Right ventricle myocardium inferior (tissue), 1 donor: ENCODE measurements at regions of chr16 and their contacts with region 1.

Region 1: DNA sequence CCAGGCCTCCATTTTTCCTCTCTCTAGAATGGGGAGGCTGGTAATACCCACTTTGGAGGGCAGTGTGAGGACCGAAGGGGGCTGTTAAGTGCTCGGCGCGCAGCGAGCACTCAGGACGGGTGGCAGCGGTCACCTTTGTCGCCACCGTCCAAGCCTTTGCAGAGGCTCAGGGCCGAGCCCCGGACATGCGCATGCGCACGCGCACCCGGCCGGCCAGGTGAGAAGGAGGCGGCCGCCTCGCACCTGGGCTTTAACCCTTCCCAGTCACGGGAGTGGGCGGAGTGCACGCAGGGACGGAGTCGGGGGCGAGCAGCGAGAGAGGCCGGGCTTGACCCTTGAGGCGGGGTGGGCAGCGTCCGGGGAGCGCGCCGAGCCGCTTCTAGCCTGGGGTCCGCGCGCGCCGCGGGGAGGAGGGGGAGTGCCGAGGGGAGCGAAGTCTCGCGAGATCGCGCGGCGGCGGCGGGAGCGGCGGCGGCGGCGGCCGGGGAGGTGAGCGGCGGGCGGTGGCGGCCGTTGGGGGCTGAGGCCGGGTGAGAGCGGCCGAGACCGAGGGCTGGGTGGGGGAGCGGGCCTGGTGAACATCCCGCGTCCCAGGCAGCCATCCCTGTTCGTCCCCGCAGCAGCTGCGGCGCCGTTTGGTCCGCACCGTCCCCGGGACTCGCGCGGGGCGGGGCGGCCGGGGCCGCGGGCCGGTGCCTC is at the start of gene MRTFB:
- DNase-seq: peak; percentile 89
- ATAC-seq: peak; percentile 89
- total RNA-seq, gene MRTFB: 23.8 TPM

Region 2: DNA sequence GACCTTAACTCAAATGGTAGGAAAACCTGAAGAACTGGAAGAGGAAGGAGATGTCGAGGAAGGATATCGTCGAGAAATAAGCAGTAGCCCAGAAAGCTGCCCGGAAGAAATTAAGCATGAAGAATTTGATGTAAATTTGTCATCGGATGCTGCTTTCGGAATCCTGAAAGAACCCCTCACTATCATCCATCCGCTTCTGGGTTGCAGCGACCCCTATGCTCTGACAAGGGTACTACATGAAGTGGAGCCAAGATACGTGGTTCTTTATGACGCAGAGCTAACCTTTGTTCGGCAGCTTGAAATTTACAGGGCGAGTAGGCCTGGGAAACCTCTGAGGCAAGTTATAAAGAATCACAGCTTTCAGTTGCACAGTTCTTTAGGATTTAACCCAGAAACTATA is 135.6 kb before region 1 on chr16:
- intact Hi-C with region 1: loop called (anchors 5 kb)
- DNase-seq: no peak
- ATAC-seq: no peak